HepG2 (cell line): ENCODE measurements at regions of chr11 and their contacts with region 1.

Region 1: DNA sequence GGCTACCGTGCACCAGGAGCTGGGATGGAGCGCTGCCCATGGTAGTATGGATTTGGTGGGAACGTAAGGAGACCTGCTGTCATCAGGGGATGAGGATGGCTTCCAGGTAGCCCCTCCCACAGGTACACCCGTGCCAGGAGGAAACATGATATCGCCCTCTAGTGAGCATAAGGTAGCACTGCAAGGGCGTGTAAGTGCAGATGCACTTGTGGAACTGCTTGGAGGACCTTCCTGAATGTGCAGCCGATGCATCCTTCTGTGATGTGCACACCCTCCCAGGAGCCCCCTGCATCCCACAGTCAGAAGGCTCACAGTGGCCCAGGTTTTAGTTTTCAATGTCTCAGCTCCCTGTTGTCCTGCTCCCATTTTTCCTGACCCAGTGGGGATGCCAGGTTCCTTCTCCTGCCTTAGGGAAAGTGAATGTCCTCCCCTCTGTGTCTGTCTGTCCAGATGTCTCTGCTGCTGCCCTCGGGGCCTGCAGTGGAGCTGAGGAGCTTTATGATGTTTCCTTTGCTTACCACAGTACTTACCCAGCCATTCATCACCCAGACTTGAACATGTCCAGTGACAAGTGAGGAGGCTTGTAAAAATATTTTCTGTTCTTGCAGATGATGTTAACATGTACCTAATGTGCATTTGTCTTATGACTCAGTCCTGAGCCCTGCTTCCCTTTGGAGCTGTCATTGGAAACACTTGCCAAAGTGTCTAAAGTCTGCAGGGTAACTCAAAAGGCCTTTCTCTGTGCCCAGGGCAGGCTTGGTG is 49.2 kb downstream of the DBX1 start:
- DNase-seq: peak; percentile 70
- ATAC-seq: peak; percentile 85
- H3K4me3 ChIP-seq: no peak overlapping the region
- H3K27ac ChIP-seq: no peak overlapping the region
- H3K4me1 ChIP-seq: no peaks in the 10 kb centered on the region
- H3K27me3 ChIP-seq: no peaks in the 10 kb centered on the region
- CTCF ChIP-seq: peak; percentile 95
- EP300 ChIP-seq: no peak
- POLR2A ChIP-seq: no peak; a peak in 1 of 4 replicates
- RAD21 ChIP-seq: peak; percentile 45; the same call in 1 of the 2 replicates

Region 2: DNA sequence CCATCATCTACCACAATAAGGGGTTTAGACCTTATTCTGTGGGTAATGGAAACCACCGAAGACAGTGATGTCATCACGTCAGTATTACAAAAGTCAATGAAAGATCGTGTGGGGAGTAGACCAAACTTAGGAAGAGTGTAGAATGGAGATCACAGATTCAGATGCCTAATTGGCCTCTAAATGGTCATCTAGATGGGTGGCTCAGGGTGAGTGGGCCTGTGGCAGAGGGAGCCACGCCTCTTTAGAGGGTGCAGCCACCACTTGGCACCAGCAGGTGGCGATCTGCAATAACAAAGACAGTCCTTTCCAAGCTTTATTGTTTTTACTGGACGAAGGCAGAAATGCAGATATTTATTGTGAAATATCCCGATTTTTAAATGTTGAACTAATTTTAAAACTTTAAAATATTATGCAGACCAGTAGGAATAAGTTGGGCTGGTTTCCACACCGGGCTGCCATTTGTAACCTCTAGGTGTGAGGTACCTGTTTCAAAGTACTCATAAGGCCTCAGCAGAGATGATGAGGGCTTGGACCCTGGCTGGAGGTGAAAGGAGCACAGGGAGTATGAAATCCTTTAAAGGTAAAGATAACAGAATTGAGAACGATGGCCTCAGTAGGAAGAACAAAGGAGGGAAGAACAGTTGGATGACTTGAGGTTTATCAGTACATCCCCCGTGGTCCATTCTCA is 172.8 kb before region 1 on chr11:
- CTCF ChIA-PET with region 1: interaction called, 10 read pairs
- POLR2A ChIA-PET with region 1: no interaction called
- in situ Hi-C with region 1: loop called (anchors 5 kb)
- intact Hi-C with region 1: loop called (anchors 1 kb)
- DNase-seq: peak; percentile 40
- ATAC-seq: peak; percentile 88
- H3K4me3 ChIP-seq: no peak overlapping the region
- H3K27ac ChIP-seq: no peak overlapping the region
- H3K4me1 ChIP-seq: peaks cover 32% of the 10 kb centered on the region
- H3K27me3 ChIP-seq: no peaks in the 10 kb centered on the region
- CTCF ChIP-seq: peak; percentile 66
- EP300 ChIP-seq: no peak
- POLR2A ChIP-seq: no peak
- RAD21 ChIP-seq: 0 out of 2 replicates have a peak, but pooled peaks have one; percentile 39

Region 3: GRCh38 chr11:20197881-20198280 is 86.8 kb after region 1 on chr11:
- CTCF ChIA-PET with region 1: no interaction called
- POLR2A ChIA-PET with region 1: no interaction called
- in situ Hi-C with region 1: no loop called
- intact Hi-C with region 1: no loop called
- DNase-seq: no peak
- ATAC-seq: no peak
- H3K4me3 ChIP-seq: no peak overlapping the region
- H3K27ac ChIP-seq: no peak overlapping the region
- H3K4me1 ChIP-seq: no peaks in the 10 kb centered on the region
- H3K27me3 ChIP-seq: peaks cover 0 to 31% of the 10 kb centered on the region in 2 experiments; a peak in 3 of 5 replicates
- CTCF ChIP-seq: no peak
- EP300 ChIP-seq: no peak
- POLR2A ChIP-seq: no peak
- RAD21 ChIP-seq: no peak